ENCODE measurements at regions of chr5 and their contacts with region 1.

Region 1: GRCh38 chr5:138464008-138464387 is 1.3 kb upstream of the EGR1 start:
- DNase-seq: peak; percentile 71
- H3K4me3 ChIP-seq: peak overlapping the region; percentile 84
- H3K27me3 ChIP-seq: no peaks in the 10 kb centered on the region
- CTCF ChIP-seq: peak; percentile 79

Region 2: GRCh38 chr5:138482638-138483037 is 18.6 kb after region 1 on chr5:
- CTCF ChIA-PET with region 1: interaction called, 11 read pairs
- POLR2A ChIA-PET with region 1: interaction called, 4 read pairs
- DNase-seq: no peak
- H3K4me3 ChIP-seq: no peak overlapping the region
- H3K27me3 ChIP-seq: no peaks in the 10 kb centered on the region
- CTCF ChIP-seq: no peak

Region 3: DNA sequence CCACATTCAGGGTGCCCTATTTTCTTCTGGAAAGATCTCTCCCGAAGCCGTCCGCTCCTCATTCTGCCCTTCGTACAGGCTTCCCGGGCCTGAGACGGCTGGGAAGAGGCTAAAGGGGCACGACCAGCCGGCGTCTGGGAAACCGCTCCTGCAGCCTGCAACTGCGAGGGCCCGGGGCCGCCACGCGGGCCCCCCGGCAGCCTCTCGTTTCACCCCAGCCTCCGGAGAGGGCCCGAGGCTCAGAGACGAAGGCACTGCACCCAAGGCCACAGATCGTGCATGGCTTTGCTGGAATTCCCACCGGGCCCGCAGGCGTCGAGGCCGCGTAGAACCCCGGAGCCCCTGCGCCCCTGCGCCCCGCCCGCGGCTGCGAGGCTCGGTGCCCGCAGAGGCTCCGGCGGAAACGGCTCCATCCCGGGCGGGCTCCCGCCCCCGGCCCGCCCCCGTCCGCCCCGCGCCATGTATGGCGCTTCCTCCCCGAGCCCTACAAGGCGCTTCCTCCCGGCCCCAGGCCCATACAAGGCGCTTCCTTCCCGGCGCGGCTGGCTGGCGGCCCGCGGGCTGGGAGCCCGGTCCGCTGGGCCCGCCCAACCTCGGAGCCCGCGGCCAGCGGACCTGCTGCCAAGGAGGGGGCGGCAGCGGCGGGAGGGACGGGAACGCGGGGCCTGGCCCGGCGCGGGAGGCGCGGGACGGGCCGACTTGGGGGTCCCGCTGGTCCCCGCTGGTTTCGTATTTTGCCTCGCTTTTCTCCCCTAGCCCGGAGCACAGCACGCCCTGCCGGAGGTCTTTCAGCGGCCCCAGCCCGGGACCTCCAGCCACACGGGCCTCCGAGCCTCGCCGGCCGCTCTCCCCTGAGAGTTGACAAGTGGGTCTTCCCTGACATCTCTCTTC is 27.9 kb after region 1 on chr5:
- CTCF ChIA-PET with region 1: interaction called, 12 read pairs
- POLR2A ChIA-PET with region 1: interaction called, 4 read pairs
- DNase-seq: peak; percentile 61
- H3K4me3 ChIP-seq: peak overlapping the region; percentile 55
- H3K27me3 ChIP-seq: no peaks in the 10 kb centered on the region; the same call in 1 of the 2 replicates
- CTCF ChIP-seq: no peak